ENCODE measurements at regions of chr11 and their contacts with region 1.

Region 1: GRCh38 chr11:91248199-91248807 is 976.3 kb upstream of the FAT3 start:
- DNase-seq: peak; percentile 39
- ATAC-seq: no peak
- H3K4me3 Mint-ChIP-seq: no peak overlapping the region
- H3K27ac Mint-ChIP-seq: no peak overlapping the region
- H3K4me1 Mint-ChIP-seq: no peaks in the 10 kb centered on the region
- H3K27me3 Mint-ChIP-seq: no peaks in the 10 kb centered on the region

Region 2: DNA sequence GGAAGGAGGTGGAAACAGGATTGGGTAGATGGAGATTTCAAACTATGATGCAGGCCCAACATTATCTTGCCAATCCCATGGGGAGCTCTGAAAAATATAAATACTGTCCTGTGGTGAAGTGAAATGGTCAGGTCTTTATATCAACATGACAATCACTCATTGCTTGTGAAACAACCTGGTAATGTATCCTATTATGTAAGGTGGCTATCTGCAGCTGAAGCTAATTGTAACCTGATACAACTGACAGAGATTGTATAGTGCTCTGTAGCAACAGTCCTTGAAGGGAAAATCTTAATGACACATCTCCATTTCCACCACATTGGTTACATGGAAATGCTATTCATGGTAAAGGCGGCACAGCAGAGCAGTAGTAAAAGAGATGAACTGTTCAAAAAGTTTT is 1004.8 kb before region 1 on chr11:
- CTCF ChIA-PET with region 1: no interaction called
- POLR2A ChIA-PET with region 1: no interaction called
- intact Hi-C with region 1: loop called (anchors 2 to 10 kb)
- DNase-seq: no peak
- ATAC-seq: no peak
- H3K4me3 Mint-ChIP-seq: no peak overlapping the region
- H3K27ac Mint-ChIP-seq: no peak overlapping the region
- H3K4me1 Mint-ChIP-seq: peaks cover 8% of the 10 kb centered on the region
- H3K27me3 Mint-ChIP-seq: peaks cover 6% of the 10 kb centered on the region

Region 3: DNA sequence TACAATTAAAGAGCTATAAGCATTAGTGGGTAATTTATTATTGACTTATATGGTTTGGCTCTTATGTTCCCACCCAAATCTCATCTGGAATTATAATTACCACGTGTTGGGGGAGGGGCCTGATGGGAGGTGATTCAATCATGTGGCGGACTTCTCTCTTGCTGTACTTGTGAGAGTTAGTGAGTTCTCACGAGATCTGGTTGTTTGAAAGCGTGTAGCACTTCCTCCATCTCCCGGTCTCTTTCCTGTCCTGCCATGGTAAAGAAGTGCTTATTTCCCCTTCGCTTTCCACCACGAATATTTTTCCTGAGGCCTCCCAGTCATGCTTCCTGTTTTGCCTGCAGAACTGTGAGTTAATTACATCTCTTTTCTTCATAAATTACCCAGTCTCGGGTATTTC is 997.3 kb before region 1 on chr11:
- CTCF ChIA-PET with region 1: no interaction called
- POLR2A ChIA-PET with region 1: no interaction called
- intact Hi-C with region 1: loop called (anchors 2 to 10 kb)
- DNase-seq: peak; percentile 29
- ATAC-seq: peak; percentile 77
- H3K4me3 Mint-ChIP-seq: peak overlapping the region; percentile 64
- H3K27ac Mint-ChIP-seq: peak overlapping the region; percentile 2
- H3K4me1 Mint-ChIP-seq: peaks cover 14% of the 10 kb centered on the region
- H3K27me3 Mint-ChIP-seq: peaks cover 2% of the 10 kb centered on the region

Region 4: GRCh38 chr11:90288212-90288821 is 960.0 kb before region 1 on chr11:
- CTCF ChIA-PET with region 1: no interaction called
- POLR2A ChIA-PET with region 1: no interaction called
- intact Hi-C with region 1: loop called in 1 of 2 experiments (anchors 1 kb)
- DNase-seq: no peak
- ATAC-seq: no peak
- H3K4me3 Mint-ChIP-seq: no peak overlapping the region
- H3K27ac Mint-ChIP-seq: no peak overlapping the region
- H3K4me1 Mint-ChIP-seq: no peaks in the 10 kb centered on the region
- H3K27me3 Mint-ChIP-seq: peaks cover 2% of the 10 kb centered on the region

Region 5: DNA sequence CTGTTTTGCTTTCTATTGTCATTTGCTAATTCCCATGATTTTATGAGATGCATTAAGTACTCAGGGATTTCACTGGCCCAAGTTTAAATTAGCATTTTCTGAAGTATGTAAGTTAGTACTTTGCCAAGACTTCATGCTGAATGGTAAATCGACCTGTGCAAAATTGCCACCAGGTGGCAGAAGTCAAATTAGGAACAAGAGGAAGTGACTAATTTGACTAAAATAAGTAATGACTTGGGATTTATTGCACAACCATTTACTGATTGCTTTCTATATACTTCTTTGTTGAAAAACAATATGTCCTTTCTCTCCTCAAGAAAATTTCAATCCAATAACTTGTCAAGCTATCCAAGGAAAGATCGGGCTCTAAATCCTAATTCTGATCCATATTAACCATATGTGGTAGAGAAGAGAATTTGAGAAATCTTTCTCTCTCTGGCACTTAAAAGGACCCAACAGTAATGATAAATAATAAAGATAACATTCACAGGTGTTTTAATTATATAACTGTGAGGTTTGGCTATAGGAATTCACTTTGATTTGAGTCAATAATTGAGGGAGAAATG is 771.8 kb before region 1 on chr11:
- CTCF ChIA-PET with region 1: no interaction called
- POLR2A ChIA-PET with region 1: no interaction called
- intact Hi-C with region 1: loop called in 1 of 2 experiments (anchors 2 kb)
- DNase-seq: peak; percentile 59
- ATAC-seq: peak; percentile 39
- H3K4me3 Mint-ChIP-seq: no peak overlapping the region
- H3K27ac Mint-ChIP-seq: no peak overlapping the region
- H3K4me1 Mint-ChIP-seq: no peaks in the 10 kb centered on the region
- H3K27me3 Mint-ChIP-seq: peaks cover 4% of the 10 kb centered on the region

Measured in activated CD4-positive, alpha-beta T cell treated with anti-CD3 and anti-CD28 coated beads for 36 hours (primary cell).